GM10248 (cell line): ENCODE measurements at regions of chr10 and their contacts with region 1.

Region 1: DNA sequence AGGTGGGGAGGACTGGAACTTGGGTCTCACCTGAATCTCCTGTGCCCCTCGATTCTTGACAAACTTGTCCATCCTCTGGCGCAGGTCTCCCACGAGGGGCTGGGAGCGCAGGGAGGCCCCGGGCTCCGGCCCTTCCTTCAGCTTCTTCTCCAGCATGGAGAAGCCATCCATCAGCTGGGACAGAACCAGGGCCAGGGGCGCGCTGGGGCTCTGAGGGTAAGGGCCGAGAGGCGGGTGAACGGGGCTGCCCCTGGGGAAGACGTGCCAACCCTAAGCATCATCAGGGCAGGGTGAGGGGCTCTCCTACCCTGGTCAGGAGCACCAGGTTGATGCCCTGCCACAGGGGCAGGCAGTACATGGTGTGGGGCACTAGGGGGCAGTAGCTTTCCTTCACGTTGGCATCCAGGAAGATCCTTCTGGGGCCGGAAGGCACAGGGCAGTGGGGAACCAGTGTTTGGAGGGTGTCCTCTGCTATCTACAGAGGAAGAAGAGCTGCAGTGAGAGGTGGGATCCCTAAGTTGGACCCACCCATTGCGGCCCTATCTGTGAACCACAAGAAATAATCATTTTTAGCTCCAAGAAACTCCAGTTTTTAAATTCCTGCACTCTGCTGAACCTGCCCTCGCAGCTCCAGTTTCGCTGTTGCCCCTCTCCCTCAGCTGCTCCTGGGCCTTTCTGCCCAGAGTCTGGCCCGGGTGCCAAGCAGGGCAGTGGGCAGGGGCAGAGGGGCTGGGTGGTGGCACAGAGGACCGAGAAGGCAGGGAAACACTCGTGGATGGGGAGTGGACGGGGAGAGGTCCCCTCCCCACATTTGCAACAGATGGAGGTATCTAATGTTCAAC is 10.8 kb upstream of the PYROXD2 start:
- DNase-seq: peak; percentile 73
- CTCF ChIP-seq: peak; percentile 77

Region 2: DNA sequence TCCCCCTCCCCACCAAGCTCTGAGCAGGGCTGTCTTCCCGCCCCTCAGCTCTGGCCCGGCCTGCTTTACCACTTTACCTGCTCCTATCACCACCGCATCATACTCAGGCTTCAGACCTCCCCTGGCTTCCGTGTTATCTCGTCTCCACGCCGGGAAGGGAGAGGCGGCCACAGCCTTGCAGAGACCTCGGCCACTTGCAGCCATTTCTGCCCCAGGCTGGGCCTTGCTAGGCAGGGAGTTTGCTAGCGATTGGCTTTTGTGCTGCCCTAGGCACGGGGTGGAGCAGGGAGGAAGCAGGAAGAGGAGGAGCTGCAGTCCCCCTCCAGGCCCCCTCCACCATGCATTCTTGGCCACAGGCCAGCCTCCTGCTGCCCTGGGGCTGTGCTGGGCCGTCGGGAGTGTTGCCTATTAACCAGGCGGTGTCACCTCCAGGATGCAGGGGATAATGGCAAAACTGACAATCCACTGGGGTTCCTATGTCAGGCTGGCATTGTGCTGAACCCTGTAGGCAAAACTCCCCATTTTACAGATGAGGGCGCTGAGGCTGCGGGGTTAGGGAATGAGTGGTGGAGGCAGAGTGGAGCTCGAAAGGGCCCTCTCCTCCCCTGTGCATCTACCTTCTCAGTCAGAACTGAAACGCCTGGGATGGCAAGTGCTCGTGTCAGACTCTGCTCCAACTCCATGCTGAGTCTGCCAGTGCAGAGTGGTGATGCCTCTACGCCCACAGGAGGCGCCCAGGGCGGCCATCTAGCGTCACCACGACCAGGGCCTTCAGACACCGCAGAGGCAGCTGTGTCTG is 10.6 kb before region 1 on chr10 and contains the start of gene PYROXD2:
- CTCF ChIA-PET with region 1: interaction called, 98 read pairs
- POLR2A ChIA-PET with region 1: no interaction called
- DNase-seq: peak; percentile 56
- CTCF ChIP-seq: no peak

Region 3: GRCh38 chr10:98446661-98447221 is 21.0 kb after region 1 on chr10 and contains the start of gene HPS1:
- CTCF ChIA-PET with region 1: interaction called, 15 read pairs
- POLR2A ChIA-PET with region 1: no interaction called
- DNase-seq: peak; percentile 95
- CTCF ChIP-seq: no peak